HCT116 (cell line): ENCODE measurements at regions of chr7 and their contacts with region 1.

Region 1: GRCh38 chr7:9921326-9921725 is 1052.3 kb upstream of the PHF14 start:
- DNase-seq: no peak
- ATAC-seq: no peak
- H3K4me3 ChIP-seq: no peak overlapping the region
- H3K27ac ChIP-seq: no peak overlapping the region
- H3K4me1 ChIP-seq: no peaks in the 10 kb centered on the region
- H3K27me3 ChIP-seq: no peaks in the 10 kb centered on the region
- CTCF ChIP-seq: no peak
- POLR2A ChIP-seq: no peak
- RAD21 ChIP-seq: no peak

Region 2: DNA sequence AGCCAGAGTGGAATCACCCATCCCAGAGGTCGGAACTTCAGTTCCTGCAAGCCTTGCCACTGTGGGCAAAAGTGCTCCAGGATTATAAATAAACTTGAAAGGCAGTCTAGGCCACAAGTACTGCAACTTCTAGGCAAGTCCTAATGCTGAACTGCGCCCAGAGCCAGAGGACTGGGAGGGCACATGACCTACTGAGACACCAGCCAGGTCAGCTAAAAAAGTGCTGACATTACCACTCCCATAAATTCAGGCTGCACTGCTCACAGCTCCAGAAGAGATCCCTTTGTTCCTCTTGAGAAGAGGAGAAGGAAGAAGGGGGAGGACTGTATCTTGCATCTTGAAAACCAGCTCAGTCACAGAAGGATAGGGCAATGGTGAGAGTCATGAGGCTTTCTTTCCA is 31.8 kb before region 1 on chr7:
- CTCF ChIA-PET with region 1: no interaction called
- POLR2A ChIA-PET with region 1: no interaction called
- RAD21 ChIA-PET with region 1: no interaction called
- intact Hi-C with region 1: loop called (anchors 2 kb)
- DNase-seq: no peak
- ATAC-seq: no peak
- H3K4me3 ChIP-seq: no peak overlapping the region
- H3K27ac ChIP-seq: no peak overlapping the region
- H3K4me1 ChIP-seq: no peaks in the 10 kb centered on the region
- H3K27me3 ChIP-seq: no peaks in the 10 kb centered on the region
- CTCF ChIP-seq: no peak
- POLR2A ChIP-seq: no peak
- RAD21 ChIP-seq: no peak

Region 3: GRCh38 chr7:9961161-9961923 is 40.0 kb after region 1 on chr7:
- CTCF ChIA-PET with region 1: no interaction called
- POLR2A ChIA-PET with region 1: no interaction called
- RAD21 ChIA-PET with region 1: no interaction called
- intact Hi-C with region 1: loop called (anchors 1 kb)
- DNase-seq: no peak
- ATAC-seq: no peak
- H3K4me3 ChIP-seq: no peak overlapping the region
- H3K27ac ChIP-seq: no peak overlapping the region
- H3K4me1 ChIP-seq: no peaks in the 10 kb centered on the region
- H3K27me3 ChIP-seq: no peaks in the 10 kb centered on the region
- CTCF ChIP-seq: no peak
- POLR2A ChIP-seq: no peak
- RAD21 ChIP-seq: no peak